ENCODE measurements at regions of chr4 and their contacts with region 1.

Region 1: DNA sequence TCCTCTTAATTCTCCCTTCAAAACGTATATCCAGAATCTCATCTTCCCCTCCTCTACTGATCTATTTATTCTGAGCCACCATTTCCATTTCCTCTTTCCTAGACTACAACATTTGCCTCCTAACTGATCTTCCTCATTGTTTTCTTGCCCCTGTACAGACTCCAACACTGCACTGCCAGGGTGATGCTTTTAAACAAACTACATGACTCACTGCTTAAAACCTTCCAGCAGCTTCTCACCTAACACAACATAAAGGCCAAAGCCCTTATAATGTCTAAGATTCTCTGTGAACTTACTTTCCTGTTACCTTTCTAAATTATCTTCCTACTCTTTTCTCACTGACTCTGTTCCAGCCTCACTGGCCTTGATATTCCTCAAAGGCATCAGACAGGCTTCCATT is 161.0 kb upstream of the HS3ST1 start:
- DNase-seq: no peak
- H3K4me3 ChIP-seq: no peak overlapping the region
- H3K27ac ChIP-seq: no peak overlapping the region
- H3K4me1 ChIP-seq: no peaks in the 10 kb centered on the region
- H3K27me3 ChIP-seq: no peaks in the 10 kb centered on the region
- CTCF ChIP-seq: no peak

Region 2: DNA sequence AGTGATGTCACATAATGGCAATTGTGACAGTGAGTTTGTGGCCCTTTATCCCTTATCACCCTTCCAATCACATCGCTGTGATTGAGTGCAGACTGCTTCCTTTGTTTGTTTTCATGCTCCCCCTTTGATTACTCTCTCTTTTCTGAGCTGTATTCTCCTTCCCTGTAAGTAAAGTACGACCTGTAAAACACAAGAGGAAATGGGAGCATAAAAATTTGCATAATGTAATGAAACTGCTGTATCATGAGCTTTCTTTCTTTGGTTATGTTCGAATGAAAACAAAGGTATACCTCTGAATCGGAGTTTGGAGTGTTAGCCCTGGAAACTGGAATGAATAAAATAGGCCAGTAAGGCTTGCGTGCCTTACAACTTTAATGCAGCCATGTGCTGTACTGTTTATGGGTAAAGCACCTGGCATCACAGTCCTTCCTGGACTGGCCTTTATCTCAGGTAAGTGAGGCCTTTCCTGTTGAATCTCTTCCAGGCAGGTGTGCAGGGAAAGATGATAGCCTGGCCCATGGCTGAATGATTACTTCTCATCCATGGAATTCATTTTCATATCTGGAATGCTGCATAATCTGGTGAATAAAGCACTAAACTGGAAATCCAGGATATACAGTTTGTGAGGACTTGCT is 134.4 kb before region 1 on chr4:
- intact Hi-C with region 1: no loop called
- DNase-seq: no peak
- H3K4me3 ChIP-seq: no peak overlapping the region
- H3K27ac ChIP-seq: no peak overlapping the region
- H3K4me1 ChIP-seq: no peaks in the 10 kb centered on the region
- H3K27me3 ChIP-seq: no peaks in the 10 kb centered on the region
- CTCF ChIP-seq: no peak

Region 3: GRCh38 chr4:12050357-12050756 is 460.7 kb after region 1 on chr4:
- intact Hi-C with region 1: loop called (anchors 5 kb)
- DNase-seq: no peak
- H3K4me3 ChIP-seq: no peak overlapping the region
- H3K27ac ChIP-seq: no peak overlapping the region
- H3K4me1 ChIP-seq: no peaks in the 10 kb centered on the region
- H3K27me3 ChIP-seq: no peaks in the 10 kb centered on the region
- CTCF ChIP-seq: no peak